GM10248 (cell line): ENCODE measurements at regions of chr10 and their contacts with region 1.

Region 1: GRCh38 chr10:97234400-97234799 is 48.6 kb upstream of the SLIT1 start:
- DNase-seq: no peak
- CTCF ChIP-seq: peak; percentile 11

Region 2: GRCh38 chr10:97081621-97082235 is 152.7 kb before region 1 on chr10:
- CTCF ChIA-PET with region 1: interaction called, 11 read pairs
- POLR2A ChIA-PET with region 1: no interaction called
- DNase-seq: peak; percentile 83
- CTCF ChIP-seq: peak; percentile 73

Region 3: DNA sequence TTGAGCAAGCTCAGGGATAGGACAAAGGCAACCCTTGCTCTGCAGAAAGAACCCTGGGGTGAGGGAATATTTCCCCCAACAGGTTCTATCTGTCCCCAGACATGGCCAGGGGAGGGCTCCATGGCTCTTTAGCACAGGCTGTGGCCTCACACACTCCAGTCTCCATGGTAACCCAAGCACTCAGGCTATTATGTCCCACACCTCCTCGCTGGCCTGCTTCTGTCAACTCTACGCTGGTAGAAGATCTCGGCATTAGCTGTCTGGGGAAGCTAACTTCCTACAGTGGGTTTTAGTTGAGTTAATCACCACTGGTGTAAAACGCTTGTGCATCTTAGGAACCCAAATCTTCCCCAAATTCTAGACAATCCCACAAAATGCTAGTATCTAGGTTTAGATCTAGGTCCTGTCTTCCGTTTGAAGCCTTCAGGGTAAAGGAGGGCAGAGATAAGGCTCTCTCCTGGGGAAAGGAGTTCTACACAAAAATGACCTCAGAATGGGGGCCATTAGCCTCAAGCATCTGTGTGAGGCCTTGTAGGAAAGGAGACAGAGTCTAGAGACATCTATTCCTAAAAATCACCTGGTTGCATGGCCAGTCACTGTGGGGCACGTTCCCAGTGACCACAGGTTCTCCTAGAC is 12.0 kb before region 1 on chr10:
- CTCF ChIA-PET with region 1: interaction called, 14 read pairs
- POLR2A ChIA-PET with region 1: no interaction called
- DNase-seq: no peak
- CTCF ChIP-seq: no peak